Left cardiac atrium (tissue), 4 donors: ENCODE measurements at regions of chr2 and their contacts with region 1.

Region 1: DNA sequence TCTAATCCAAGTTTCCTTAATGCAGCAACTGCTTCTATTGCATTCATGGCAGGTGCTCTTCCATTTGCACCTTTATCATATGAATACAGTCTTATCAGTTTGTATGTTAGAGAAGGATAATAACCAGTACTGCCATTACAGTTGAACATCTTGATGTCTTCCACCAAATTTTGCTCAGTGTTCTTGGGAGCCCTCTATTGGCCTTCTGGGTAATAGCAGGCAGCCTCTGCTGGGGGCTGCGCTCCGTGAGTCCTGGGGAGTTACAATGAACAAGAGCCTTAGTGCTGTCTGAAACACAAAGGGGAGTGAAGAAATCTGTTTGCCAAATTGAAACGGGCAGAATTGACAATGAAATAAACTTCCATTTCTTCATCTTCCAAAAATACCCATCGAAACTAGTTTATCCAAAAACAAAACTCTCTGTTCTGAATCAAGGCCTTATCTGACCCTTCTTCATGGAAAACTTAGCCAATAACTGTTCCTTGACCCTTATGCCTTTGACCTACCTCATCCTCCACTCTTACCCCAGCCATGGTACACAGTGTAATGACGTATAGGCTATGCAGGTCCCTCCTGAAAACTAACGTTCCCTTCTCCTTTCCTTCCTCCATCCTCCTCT is 79.9 kb downstream of the ALK start:
- DNase-seq: no peak
- ATAC-seq: peak in 1 of 2 donors; percentile 57

Region 2: DNA sequence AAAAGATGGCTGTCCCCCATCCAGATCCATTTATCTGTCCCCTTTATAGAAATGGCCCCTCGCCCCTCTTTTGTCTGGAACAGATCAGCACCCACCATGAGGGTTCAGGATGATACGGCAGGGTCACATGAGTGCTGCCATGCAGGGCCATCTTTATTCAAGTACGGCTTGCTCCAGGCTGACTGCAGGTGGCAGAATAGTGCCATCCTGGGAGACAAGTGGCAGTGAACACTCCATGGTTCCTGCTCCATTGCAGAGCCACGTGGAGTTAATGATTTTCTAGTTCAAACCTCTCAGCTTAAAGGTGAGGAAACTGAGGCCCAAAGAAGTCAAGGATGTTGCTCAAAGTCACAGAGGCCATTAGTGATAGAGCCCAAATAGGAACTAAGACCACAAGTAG is 545.6 kb before region 1 on chr2:
- intact Hi-C with region 1: loop called in 1 of 2 experiments (anchors 5 kb)
- DNase-seq: no peak
- ATAC-seq: no peak

Region 3: DNA sequence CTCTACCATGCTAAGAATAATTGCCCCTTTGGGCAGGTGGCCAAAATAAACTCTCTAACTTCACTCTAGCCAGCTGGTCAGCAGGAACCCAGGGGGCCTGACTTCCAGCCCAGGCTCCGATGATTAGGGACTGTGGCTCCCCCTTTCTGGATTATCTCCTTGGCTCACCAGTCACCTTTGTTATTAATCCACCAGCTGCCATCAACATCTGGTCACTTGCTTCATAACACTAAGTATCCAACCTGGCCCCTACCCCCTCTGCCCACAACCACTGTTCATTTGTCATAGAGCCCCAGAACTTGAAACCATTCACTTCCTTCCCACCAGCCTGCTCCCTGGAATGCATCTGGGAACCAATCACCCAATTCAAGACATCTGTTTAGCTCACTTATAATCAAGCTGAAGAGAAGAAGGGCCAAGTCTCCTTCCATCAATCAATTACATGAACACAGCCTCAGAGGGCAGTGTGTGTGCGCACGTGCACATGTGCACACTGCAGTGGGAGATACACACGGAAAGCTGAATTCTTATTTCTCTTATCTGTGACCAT is 135.2 kb before region 1 on chr2:
- intact Hi-C with region 1: no loop called
- DNase-seq: no peak
- ATAC-seq: no peak